ENCODE measurements at regions of chr7 and their contacts with region 1.

Region 1: GRCh38 chr7:36318116-36318515 is 71.5 kb upstream of the ANLN start:
- DNase-seq: no peak
- H3K4me3 ChIP-seq: no peak overlapping the region
- H3K27ac ChIP-seq: no peak overlapping the region
- H3K4me1 ChIP-seq: no peaks in the 10 kb centered on the region
- H3K27me3 ChIP-seq: no peaks in the 10 kb centered on the region
- CTCF ChIP-seq: no peak
- POLR2A ChIP-seq: no peak

Region 2: GRCh38 chr7:35985126-35985754 is 332.9 kb before region 1 on chr7:
- intact Hi-C with region 1: loop called (anchors 2 kb)
- DNase-seq: peak; percentile 79
- H3K4me3 ChIP-seq: no peak overlapping the region
- H3K27ac ChIP-seq: no peak overlapping the region
- H3K4me1 ChIP-seq: no peaks in the 10 kb centered on the region
- H3K27me3 ChIP-seq: no peaks in the 10 kb centered on the region
- CTCF ChIP-seq: peak; percentile 82 to 97 (median 94)
- POLR2A ChIP-seq: no peak

Region 3: GRCh38 chr7:36037121-36037662 is 280.9 kb before region 1 on chr7:
- intact Hi-C with region 1: no loop called
- DNase-seq: peak; percentile 94
- H3K4me3 ChIP-seq: no peak overlapping the region
- H3K27ac ChIP-seq: peak overlapping the region; percentile 51 to 59
- H3K4me1 ChIP-seq: peaks cover 11% of the 10 kb centered on the region
- H3K27me3 ChIP-seq: no peaks in the 10 kb centered on the region
- CTCF ChIP-seq: no peak
- POLR2A ChIP-seq: no peak

Region 4: GRCh38 chr7:36583318-36583717 is 265.2 kb after region 1 on chr7:
- intact Hi-C with region 1: no loop called
- DNase-seq: no peak
- H3K4me3 ChIP-seq: no peak overlapping the region
- H3K27ac ChIP-seq: no peak overlapping the region
- H3K4me1 ChIP-seq: no peaks in the 10 kb centered on the region
- H3K27me3 ChIP-seq: no peaks in the 10 kb centered on the region
- CTCF ChIP-seq: no peak
- POLR2A ChIP-seq: no peak